CD4-positive, alpha-beta T cell (primary cell): ENCODE measurements at regions of chr2 and their contacts with region 1.

Region 1: GRCh38 chr2:213151437-213152064 is at the start of gene IKZF2:
- DNase-seq: peak; percentile 12 to 94 (median 70)
- ATAC-seq: peak; percentile 73
- H3K4me3 ChIP-seq: peak within 1 kb of the TSS; percentile 71
- H3K4me3 Mint-ChIP-seq: peak within 1 kb of the TSS; percentile 98
- H3K27ac ChIP-seq: peak within 1 kb of the TSS; percentile 54 to 72
- H3K27ac Mint-ChIP-seq: peak within 1 kb of the TSS; percentile 93
- H3K4me1 ChIP-seq: no peaks in the 10 kb centered on the region
- H3K4me1 Mint-ChIP-seq: peaks cover 49% of the 10 kb centered on the region
- H3K27me3 ChIP-seq: peaks cover 4 to 15% of the 10 kb centered on the region in 2 experiments
- H3K27me3 Mint-ChIP-seq: peaks cover 44% of the 10 kb centered on the region
- CTCF ChIP-seq: no peak
- total RNA-seq, gene IKZF2: 8.7 to 8.9 TPM

Region 2: DNA sequence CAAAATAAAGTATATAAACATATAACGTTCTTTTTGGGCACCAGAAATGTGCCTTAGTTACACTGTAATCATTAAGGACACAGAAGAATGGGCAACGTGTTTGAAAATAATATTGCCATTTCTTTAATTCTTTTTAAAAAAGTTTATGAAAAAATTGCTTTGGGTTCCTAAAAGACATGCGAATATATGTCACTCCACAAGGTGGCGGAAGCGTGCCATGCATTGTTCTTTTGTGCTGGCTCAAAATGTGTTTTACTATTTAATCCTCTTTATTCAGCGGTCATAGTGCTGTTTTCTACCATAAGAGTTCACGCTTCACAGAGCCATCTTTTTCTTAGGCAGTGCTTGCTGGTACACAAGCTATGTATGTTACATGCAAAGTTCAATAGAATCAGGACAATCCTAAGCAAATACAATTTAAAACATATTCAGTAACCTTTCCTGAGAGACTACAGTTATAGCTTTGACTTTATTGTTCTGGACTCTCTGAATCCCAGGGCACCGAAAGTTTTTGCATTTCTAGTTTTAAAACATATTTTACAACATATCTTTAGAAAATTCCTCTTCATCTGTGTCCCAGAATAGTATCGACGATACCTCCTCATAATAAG is 465.2 kb before region 1 on chr2:
- CTCF ChIA-PET with region 1: no interaction called
- POLR2A ChIA-PET with region 1: no interaction called
- intact Hi-C with region 1: loop called (anchors 1 to 2 kb)
- DNase-seq: peak; percentile 5 to 74 (median 30)
- ATAC-seq: peak; percentile 48
- H3K4me3 ChIP-seq: no peak overlapping the region
- H3K4me3 Mint-ChIP-seq: no peak overlapping the region
- H3K27ac ChIP-seq: no peak overlapping the region
- H3K27ac Mint-ChIP-seq: no peak overlapping the region
- H3K4me1 ChIP-seq: no peaks in the 10 kb centered on the region
- H3K4me1 Mint-ChIP-seq: peaks cover 4% of the 10 kb centered on the region
- H3K27me3 ChIP-seq: no peaks in the 10 kb centered on the region
- H3K27me3 Mint-ChIP-seq: peaks cover under 1% of the 10 kb centered on the region
- CTCF ChIP-seq: peak; percentile 85

Region 3: GRCh38 chr2:212777020-212777491 is 374.5 kb before region 1 on chr2:
- CTCF ChIA-PET with region 1: interaction called, 7 read pairs
- POLR2A ChIA-PET with region 1: interaction called, 6 read pairs
- intact Hi-C with region 1: loop called (anchors 1 to 2 kb)
- DNase-seq: peak in 3 of 14 experiments; percentile 23 to 48 (median 35)
- ATAC-seq: peak; percentile 65
- H3K4me3 ChIP-seq: no peak overlapping the region
- H3K4me3 Mint-ChIP-seq: no peak overlapping the region
- H3K27ac ChIP-seq: no peak overlapping the region
- H3K27ac Mint-ChIP-seq: no peak overlapping the region
- H3K4me1 ChIP-seq: no peaks in the 10 kb centered on the region
- H3K4me1 Mint-ChIP-seq: no peaks in the 10 kb centered on the region
- H3K27me3 ChIP-seq: no peaks in the 10 kb centered on the region
- H3K27me3 Mint-ChIP-seq: no peaks in the 10 kb centered on the region
- CTCF ChIP-seq: peak; percentile 74

Region 4: DNA sequence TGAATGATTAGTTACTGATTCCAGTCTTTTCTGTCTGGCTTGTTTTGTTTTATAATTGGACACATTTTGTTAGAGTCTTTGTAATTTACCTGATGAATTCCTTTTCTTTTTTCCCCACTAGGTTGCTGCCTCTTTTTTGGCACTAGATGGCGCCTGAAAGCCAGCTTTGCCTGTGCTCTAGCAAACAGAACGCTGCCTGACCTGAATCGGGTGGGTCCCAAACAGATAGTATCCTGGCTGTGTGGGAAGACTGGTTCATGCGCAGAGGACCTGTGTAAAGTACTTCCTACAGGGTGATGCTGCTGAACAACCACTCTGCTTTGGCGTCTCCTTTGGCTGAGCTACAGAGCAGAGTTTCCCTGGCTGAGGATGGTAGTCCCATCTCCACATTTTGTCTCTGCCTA is 288.4 kb before region 1 on chr2:
- CTCF ChIA-PET with region 1: no interaction called
- POLR2A ChIA-PET with region 1: no interaction called
- intact Hi-C with region 1: loop called in 1 of 2 experiments (anchors 10 kb)
- DNase-seq: peak in 3 of 14 experiments; percentile 13 to 21 (median 18)
- ATAC-seq: no peak
- H3K4me3 ChIP-seq: no peak overlapping the region
- H3K4me3 Mint-ChIP-seq: no peak overlapping the region
- H3K27ac ChIP-seq: no peak overlapping the region
- H3K27ac Mint-ChIP-seq: no peak overlapping the region
- H3K4me1 ChIP-seq: no peaks in the 10 kb centered on the region
- H3K4me1 Mint-ChIP-seq: no peaks in the 10 kb centered on the region
- H3K27me3 ChIP-seq: no peaks in the 10 kb centered on the region
- H3K27me3 Mint-ChIP-seq: no peaks in the 10 kb centered on the region
- CTCF ChIP-seq: no peak

Region 5: DNA sequence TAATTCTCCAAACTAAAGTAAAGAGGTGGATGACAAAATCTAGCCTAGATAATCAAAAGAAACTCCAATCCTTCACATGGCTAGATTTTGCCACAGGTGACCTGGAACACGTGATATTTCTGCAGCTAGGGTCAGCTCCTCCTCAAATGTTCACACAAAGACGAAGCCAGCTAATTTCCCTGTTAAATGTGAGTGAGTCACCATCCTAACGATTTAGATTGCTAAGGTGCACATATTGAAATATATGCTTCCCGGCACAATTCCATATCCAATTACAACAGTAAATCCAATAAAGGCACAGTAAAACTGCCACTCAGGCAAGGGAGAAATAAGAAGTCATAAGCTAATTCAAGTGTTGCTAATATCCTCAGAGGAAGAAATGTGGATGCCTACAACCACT is 28.8 kb before region 1 on chr2:
- CTCF ChIA-PET with region 1: interaction called, 3 read pairs
- POLR2A ChIA-PET with region 1: interaction called, 10 read pairs
- intact Hi-C with region 1: no loop called
- DNase-seq: no peak
- ATAC-seq: no peak
- H3K4me3 ChIP-seq: no peak overlapping the region
- H3K4me3 Mint-ChIP-seq: no peak overlapping the region
- H3K27ac ChIP-seq: no peak overlapping the region
- H3K27ac Mint-ChIP-seq: peak overlapping the region; percentile 67
- H3K4me1 ChIP-seq: peaks cover 2% of the 10 kb centered on the region
- H3K4me1 Mint-ChIP-seq: peaks cover 47% of the 10 kb centered on the region
- H3K27me3 ChIP-seq: no peaks in the 10 kb centered on the region
- H3K27me3 Mint-ChIP-seq: no peaks in the 10 kb centered on the region
- CTCF ChIP-seq: no peak

Region 6: DNA sequence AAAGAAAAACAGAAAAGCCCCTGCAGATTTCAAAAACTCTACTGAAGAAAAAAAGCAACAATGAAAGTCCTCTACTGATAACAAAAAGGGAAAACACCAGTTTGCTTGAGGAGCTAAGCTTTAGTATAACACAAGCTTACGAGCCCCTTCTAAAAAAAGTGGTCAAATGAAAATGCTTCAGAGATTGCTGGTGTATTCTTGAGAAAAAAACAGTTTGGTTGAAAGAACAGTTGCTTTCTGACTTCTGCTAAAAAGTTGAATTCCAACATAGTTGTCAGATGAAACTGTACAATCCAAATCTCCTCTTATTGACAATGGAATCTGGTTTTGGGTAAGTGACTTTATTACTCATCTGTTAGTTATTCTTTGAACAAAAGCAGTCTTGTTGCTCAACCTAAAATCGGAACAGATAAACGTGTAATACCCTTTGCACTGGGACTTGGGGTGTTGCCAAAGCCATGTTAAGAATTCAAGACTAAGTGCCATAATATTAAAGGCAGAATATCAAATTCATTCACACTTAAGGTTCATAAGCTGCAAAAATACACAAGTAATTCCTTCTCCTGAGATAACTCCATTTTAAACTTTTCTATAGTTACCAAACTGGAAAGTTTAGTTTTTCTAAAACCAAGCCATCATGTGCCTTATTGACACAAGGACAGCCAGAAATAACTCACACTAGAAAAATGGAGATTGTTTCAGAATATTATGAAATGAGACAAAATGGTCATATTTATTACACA is 87.4 kb after region 1 on chr2:
- CTCF ChIA-PET with region 1: no interaction called
- POLR2A ChIA-PET with region 1: interaction called, 11 read pairs
- intact Hi-C with region 1: loop called in 1 of 2 experiments (anchors 10 kb)
- DNase-seq: peak in 1 of 14 experiments; percentile 11
- ATAC-seq: no peak
- H3K4me3 ChIP-seq: no peak overlapping the region
- H3K4me3 Mint-ChIP-seq: peak overlapping the region; percentile 70
- H3K27ac ChIP-seq: no peak overlapping the region
- H3K27ac Mint-ChIP-seq: peak overlapping the region; percentile 77
- H3K4me1 ChIP-seq: no peaks in the 10 kb centered on the region
- H3K4me1 Mint-ChIP-seq: peaks cover 41% of the 10 kb centered on the region
- H3K27me3 ChIP-seq: no peaks in the 10 kb centered on the region
- H3K27me3 Mint-ChIP-seq: peaks cover 6% of the 10 kb centered on the region
- CTCF ChIP-seq: no peak

Region 7: DNA sequence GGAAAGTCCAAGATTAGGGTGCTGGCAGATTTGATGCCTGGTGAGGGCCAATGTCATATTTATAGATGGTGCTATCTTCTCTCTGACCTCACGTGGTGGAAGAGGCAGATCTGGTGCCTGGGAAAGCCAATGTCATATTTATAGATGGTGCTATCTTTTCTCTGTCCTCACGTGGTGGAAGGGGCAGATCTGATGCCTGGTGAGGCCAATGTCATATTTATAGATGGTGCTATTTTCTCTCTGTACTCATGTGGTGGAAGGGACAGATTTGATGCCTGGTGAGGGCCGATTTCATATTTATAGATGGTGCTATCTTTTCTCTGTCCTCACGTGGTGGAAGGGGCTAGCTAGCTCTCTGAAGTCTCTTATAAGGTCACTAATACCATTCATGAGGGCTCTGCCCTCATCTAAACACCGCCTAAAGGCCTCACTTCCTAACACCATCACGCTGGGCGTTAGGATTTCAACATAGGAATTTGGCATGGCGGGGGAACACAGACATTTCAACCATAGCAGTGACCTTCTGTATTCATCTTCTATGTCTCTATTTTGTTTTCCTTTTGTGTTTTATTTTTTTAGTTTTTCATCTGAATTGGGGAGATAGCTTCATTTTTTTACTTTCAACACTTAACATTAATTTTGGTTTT is 411.1 kb after region 1 on chr2:
- CTCF ChIA-PET with region 1: no interaction called
- POLR2A ChIA-PET with region 1: no interaction called
- intact Hi-C with region 1: no loop called
- DNase-seq: no peak
- ATAC-seq: no peak
- H3K4me3 ChIP-seq: no peak overlapping the region
- H3K4me3 Mint-ChIP-seq: no peak overlapping the region
- H3K27ac ChIP-seq: no peak overlapping the region
- H3K27ac Mint-ChIP-seq: no peak overlapping the region
- H3K4me1 ChIP-seq: no peaks in the 10 kb centered on the region
- H3K4me1 Mint-ChIP-seq: no peaks in the 10 kb centered on the region
- H3K27me3 ChIP-seq: no peaks in the 10 kb centered on the region
- H3K27me3 Mint-ChIP-seq: no peaks in the 10 kb centered on the region
- CTCF ChIP-seq: no peak